Psoas muscle (tissue), 8 donors: ENCODE measurements at regions of chr1 and their contacts with region 1.

Region 1: DNA sequence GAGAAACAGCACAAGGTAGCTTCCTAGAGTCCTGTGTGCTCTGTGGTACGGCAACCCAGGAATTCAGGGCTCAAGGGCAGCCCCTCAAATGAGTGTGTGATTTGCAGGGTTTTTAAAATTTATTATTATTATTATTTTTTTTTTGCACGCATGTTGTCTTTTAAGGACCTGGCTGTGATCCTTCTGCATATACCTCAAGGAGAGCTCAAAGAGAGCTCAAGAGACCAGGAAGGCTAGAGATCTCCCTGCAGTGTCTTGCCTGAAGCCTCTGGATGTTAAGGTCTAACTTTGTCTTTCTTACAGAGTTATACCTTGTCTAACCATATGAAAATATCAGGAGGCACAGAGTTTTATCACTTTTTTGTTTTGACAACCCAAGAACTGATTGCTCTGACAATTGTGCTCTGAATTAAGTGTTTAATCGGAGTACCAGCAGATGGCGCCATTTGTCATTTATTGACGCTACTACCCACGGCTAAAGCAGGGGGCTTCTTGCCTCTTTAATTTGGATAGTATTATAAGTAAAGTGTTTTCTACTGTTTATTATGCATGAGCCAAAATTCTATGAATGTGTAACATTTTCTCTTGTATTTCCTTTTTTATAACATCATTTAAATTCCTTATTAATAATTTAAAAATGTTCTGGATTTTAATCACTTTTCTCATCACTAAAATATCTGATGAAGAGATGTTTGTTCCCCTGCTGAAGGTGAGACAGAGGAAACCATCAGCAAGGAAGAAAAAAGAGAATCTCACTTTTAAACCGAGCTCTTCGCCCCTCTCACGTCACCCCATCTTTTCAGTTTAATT is 35.8 kb upstream of the LMO4 start:
- DNase-seq: no peak
- ATAC-seq: peak in 2 of 4 donors; percentile 58 to 77
- H3K4me3 ChIP-seq: no peak overlapping the region
- H3K27ac ChIP-seq: no peak overlapping the region
- H3K4me1 ChIP-seq: no peaks in the 10 kb centered on the region
- H3K27me3 ChIP-seq: peaks cover 0 to 1% (median 0%) of the 10 kb centered on the region in 3 donors
- CTCF ChIP-seq: peak; percentile 83

Region 2: DNA sequence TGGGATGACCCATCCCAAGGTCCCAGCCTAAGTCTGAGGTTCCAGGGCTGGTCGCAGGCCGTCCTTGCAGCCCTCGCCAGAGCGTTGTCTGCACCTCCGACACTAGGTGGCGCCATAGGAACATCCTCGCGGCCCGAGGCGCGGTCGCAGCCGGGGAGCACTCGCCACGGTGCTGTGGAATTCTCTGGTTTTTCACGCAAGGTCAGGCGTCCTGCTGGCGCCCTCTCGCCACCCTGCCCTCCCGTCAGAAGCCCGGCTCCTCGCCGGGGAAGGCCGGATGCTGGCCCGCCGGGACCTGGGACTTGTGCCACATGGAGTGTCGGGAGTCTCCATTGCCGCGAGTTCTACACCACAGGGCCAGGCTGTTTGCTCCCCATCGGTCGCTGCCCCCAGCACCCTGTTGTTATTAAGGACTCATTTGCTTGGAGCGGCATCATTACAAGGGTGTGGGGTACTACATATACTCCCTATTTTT is 161.0 kb before region 1 on chr1:
- intact Hi-C with region 1: loop called in 1 of 2 experiments (anchors 10 kb)
- DNase-seq: peak; percentile 75 to 88
- ATAC-seq: peak; percentile 86 to 93 (median 90)
- H3K4me3 ChIP-seq: peak overlapping the region; percentile 60
- H3K27ac ChIP-seq: no peak overlapping the region
- H3K4me1 ChIP-seq: no peaks in the 10 kb centered on the region
- H3K27me3 ChIP-seq: peaks cover 0 to 3% (median 0%) of the 10 kb centered on the region in 3 donors
- CTCF ChIP-seq: peak; percentile 84

Region 3: GRCh38 chr1:87953732-87954344 is 660.9 kb after region 1 on chr1:
- intact Hi-C with region 1: loop called (anchors 2 to 5 kb)
- DNase-seq: peak; percentile 33 to 64
- ATAC-seq: peak in 3 of 4 donors; percentile 64 to 83 (median 67)
- H3K4me3 ChIP-seq: no peak overlapping the region
- H3K27ac ChIP-seq: no peak overlapping the region
- H3K4me1 ChIP-seq: no peaks in the 10 kb centered on the region
- H3K27me3 ChIP-seq: no peaks in the 10 kb centered on the region
- CTCF ChIP-seq: peak; percentile 82

Region 4: GRCh38 chr1:88052167-88052566 is 759.3 kb after region 1 on chr1:
- intact Hi-C with region 1: loop called (anchors 5 to 10 kb)
- DNase-seq: no peak
- ATAC-seq: no peak
- H3K4me3 ChIP-seq: no peak overlapping the region
- H3K27ac ChIP-seq: no peak overlapping the region
- H3K4me1 ChIP-seq: no peaks in the 10 kb centered on the region
- H3K27me3 ChIP-seq: no peaks in the 10 kb centered on the region
- CTCF ChIP-seq: no peak

Region 5: GRCh38 chr1:88058205-88058604 is 765.3 kb after region 1 on chr1:
- intact Hi-C with region 1: loop called (anchors 5 to 10 kb)
- DNase-seq: no peak
- ATAC-seq: no peak
- H3K4me3 ChIP-seq: no peak overlapping the region
- H3K27ac ChIP-seq: no peak overlapping the region
- H3K4me1 ChIP-seq: no peaks in the 10 kb centered on the region
- H3K27me3 ChIP-seq: no peaks in the 10 kb centered on the region
- CTCF ChIP-seq: no peak

Region 6: GRCh38 chr1:88311907-88312306 is 1019.0 kb after region 1 on chr1:
- intact Hi-C with region 1: loop called in 1 of 2 experiments (anchors 10 kb)
- DNase-seq: no peak
- ATAC-seq: no peak
- H3K4me3 ChIP-seq: no peak overlapping the region
- H3K27ac ChIP-seq: no peak overlapping the region
- H3K4me1 ChIP-seq: no peaks in the 10 kb centered on the region
- H3K27me3 ChIP-seq: peaks cover 0 to 4% (median 0%) of the 10 kb centered on the region in 3 donors
- CTCF ChIP-seq: no peak